ENCODE measurements at regions of chr12 and their contacts with region 1.

Region 1: GRCh38 chr12:13100882-13101769 is 2.3 kb downstream of the GSG1 start:
- DNase-seq: peak; percentile 47 to 92
- H3K4me3 ChIP-seq: peak overlapping the region; percentile 61 to 72 (median 64)
- H3K27ac ChIP-seq: peak overlapping the region; percentile 70
- H3K4me1 ChIP-seq: peaks cover 5 to 21% (median 14%) of the 10 kb centered on the region in 4 experiments; a peak in 6 of 7 replicates
- H3K27me3 ChIP-seq: no peaks in the 10 kb centered on the region
- CTCF ChIP-seq: no peak
- EP300 ChIP-seq: 0 out of 3 replicates have a peak, but pooled peaks of 1 of the 2 experiments have one; percentile 34
- POLR2A ChIP-seq: peak; percentile 28 to 61; a peak in 2 of 3 replicates
- RAD21 ChIP-seq: no peak

Region 2: GRCh38 chr12:13085968-13086686 is 15.0 kb before region 1 on chr12:
- CTCF ChIA-PET with region 1: interaction called, 18 read pairs
- POLR2A ChIA-PET with region 1: interaction called, 44 read pairs
- DNase-seq: no peak
- H3K4me3 ChIP-seq: no peak overlapping the region
- H3K27ac ChIP-seq: no peak overlapping the region
- H3K4me1 ChIP-seq: peaks cover 20 to 26% (median 24%) of the 10 kb centered on the region in 4 experiments
- H3K27me3 ChIP-seq: no peaks in the 10 kb centered on the region
- CTCF ChIP-seq: no peak
- EP300 ChIP-seq: no peak
- POLR2A ChIP-seq: no peak
- RAD21 ChIP-seq: no peak

Region 3: DNA sequence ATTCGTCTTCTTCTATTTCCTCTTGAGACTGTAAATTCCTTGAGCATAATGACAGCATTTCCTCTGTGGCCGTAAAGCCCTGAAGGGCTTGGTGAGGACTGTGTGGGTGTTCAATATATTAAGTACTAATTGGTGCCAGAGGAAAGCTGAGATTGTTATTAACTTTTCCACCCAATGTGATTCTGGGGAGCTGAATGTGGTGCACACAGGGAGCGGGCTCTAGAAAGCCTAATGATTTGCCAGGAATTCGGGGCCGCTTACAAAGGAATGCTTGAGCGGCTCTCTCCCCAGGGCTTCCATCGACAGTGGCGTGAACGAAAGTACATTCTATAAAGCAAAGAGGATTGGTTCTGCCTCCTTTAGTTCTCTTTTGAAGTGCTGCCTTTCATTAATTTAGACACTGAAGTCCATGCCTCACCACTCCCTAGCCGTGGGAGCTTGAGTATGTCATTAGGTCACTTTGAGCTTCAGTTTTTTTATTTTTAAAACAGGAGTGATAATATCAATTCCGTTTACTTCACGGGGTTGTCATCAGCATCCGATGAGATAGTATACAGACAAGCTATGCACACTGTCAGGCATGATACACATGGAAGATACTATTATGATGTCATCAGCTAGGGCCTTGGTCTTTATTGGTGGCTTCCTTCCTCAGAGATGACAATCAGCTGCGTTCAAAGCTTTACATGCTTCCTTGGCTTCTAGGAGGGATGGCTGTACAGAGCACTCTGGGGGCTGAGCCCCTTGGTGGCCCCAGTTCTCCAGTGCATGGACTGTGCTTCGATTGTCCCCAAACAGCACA is 13.3 kb after region 1 on chr12:
- CTCF ChIA-PET with region 1: interaction called, 25 read pairs
- POLR2A ChIA-PET with region 1: interaction called, 8 read pairs
- DNase-seq: no peak
- H3K4me3 ChIP-seq: no peak overlapping the region
- H3K27ac ChIP-seq: no peak overlapping the region
- H3K4me1 ChIP-seq: peaks cover 0 to 13% (median 7%) of the 10 kb centered on the region in 4 experiments; a peak in 6 of 7 replicates
- H3K27me3 ChIP-seq: peaks cover 0 to 3% (median 0%) of the 10 kb centered on the region in 4 experiments; a peak in 1 of 7 replicates
- CTCF ChIP-seq: no peak
- EP300 ChIP-seq: no peak
- POLR2A ChIP-seq: no peak
- RAD21 ChIP-seq: no peak

Region 4: GRCh38 chr12:13196130-13196921 is 95.2 kb after region 1 on chr12 and contains the start of gene EMP1:
- CTCF ChIA-PET with region 1: interaction called, 69 read pairs
- POLR2A ChIA-PET with region 1: no interaction called
- DNase-seq: no peak
- H3K4me3 ChIP-seq: no peak within 1 kb of the TSS
- H3K27ac ChIP-seq: no peak within 1 kb of the TSS
- H3K4me1 ChIP-seq: peaks cover 1 to 5% (median 3%) of the 10 kb centered on the region in 4 experiments; a peak in 3 of 7 replicates
- H3K27me3 ChIP-seq: no peaks in the 10 kb centered on the region
- CTCF ChIP-seq: no peak
- EP300 ChIP-seq: no peak
- POLR2A ChIP-seq: no peak
- RAD21 ChIP-seq: no peak
- total RNA-seq, gene EMP1: 0.57 and 0.65 TPM in 2 replicates

Region 5: GRCh38 chr12:13203034-13203922 is 102.2 kb after region 1 on chr12:
- CTCF ChIA-PET with region 1: interaction called, 69 read pairs
- POLR2A ChIA-PET with region 1: interaction called, 3 read pairs
- DNase-seq: peak; percentile 60 to 77
- H3K4me3 ChIP-seq: no peak overlapping the region
- H3K27ac ChIP-seq: no peak overlapping the region
- H3K4me1 ChIP-seq: peaks cover 5 to 21% (median 13%) of the 10 kb centered on the region in 4 experiments
- H3K27me3 ChIP-seq: no peaks in the 10 kb centered on the region
- CTCF ChIP-seq: peak; percentile 74 to 80 (median 79)
- EP300 ChIP-seq: no peak
- POLR2A ChIP-seq: no peak
- RAD21 ChIP-seq: peak; percentile 93 to 95

Measured in H1 (cell line).